Activated B cell treated with CpG ODN at 0.5 μM for 24 hours (primary cell): ENCODE measurements at regions of chr15 and their contacts with region 1.

Region 1: GRCh38 chr15:88904624-88905327 is 8.4 kb downstream of the MFGE8 start:
- DNase-seq: peak; percentile 64
- ATAC-seq: peak; percentile 92
- H3K4me3 Mint-ChIP-seq: no peak overlapping the region
- H3K27ac Mint-ChIP-seq: no peak overlapping the region
- H3K4me1 Mint-ChIP-seq: peaks cover 7% of the 10 kb centered on the region
- H3K27me3 Mint-ChIP-seq: no peaks in the 10 kb centered on the region
- CTCF ChIP-seq: peak; percentile 96

Region 2: GRCh38 chr15:89017370-89018066 is 112.7 kb after region 1 on chr15:
- CTCF ChIA-PET with region 1: interaction called, 5 read pairs
- POLR2A ChIA-PET with region 1: no interaction called
- intact Hi-C with region 1: loop called (anchors 1 kb)
- DNase-seq: peak; percentile 48
- ATAC-seq: peak; percentile 58
- H3K4me3 Mint-ChIP-seq: peak overlapping the region; percentile 44
- H3K27ac Mint-ChIP-seq: no peak overlapping the region
- H3K4me1 Mint-ChIP-seq: peaks cover 8% of the 10 kb centered on the region
- H3K27me3 Mint-ChIP-seq: peaks cover 32% of the 10 kb centered on the region
- CTCF ChIP-seq: no peak

Region 3: GRCh38 chr15:89129123-89129815 is 224.5 kb after region 1 on chr15:
- CTCF ChIA-PET with region 1: interaction called, 24 read pairs
- POLR2A ChIA-PET with region 1: no interaction called
- intact Hi-C with region 1: loop called (anchors 1 kb)
- DNase-seq: peak; percentile 45
- ATAC-seq: peak; percentile 64
- H3K4me3 Mint-ChIP-seq: no peak overlapping the region
- H3K27ac Mint-ChIP-seq: no peak overlapping the region
- H3K4me1 Mint-ChIP-seq: peaks cover 14% of the 10 kb centered on the region
- H3K27me3 Mint-ChIP-seq: no peaks in the 10 kb centered on the region
- CTCF ChIP-seq: peak; percentile 60

Region 4: GRCh38 chr15:89171136-89172072 is 266.6 kb after region 1 on chr15:
- CTCF ChIA-PET with region 1: interaction called, 11 read pairs
- POLR2A ChIA-PET with region 1: no interaction called
- intact Hi-C with region 1: no loop called
- DNase-seq: no peak
- ATAC-seq: no peak
- H3K4me3 Mint-ChIP-seq: no peak overlapping the region
- H3K27ac Mint-ChIP-seq: no peak overlapping the region
- H3K4me1 Mint-ChIP-seq: peaks cover 3% of the 10 kb centered on the region
- H3K27me3 Mint-ChIP-seq: no peaks in the 10 kb centered on the region
- CTCF ChIP-seq: peak; percentile 23

Region 5: GRCh38 chr15:89177633-89178306 is 273.0 kb after region 1 on chr15:
- CTCF ChIA-PET with region 1: interaction called, 14 read pairs
- POLR2A ChIA-PET with region 1: no interaction called
- intact Hi-C with region 1: loop called (anchors 1 kb)
- DNase-seq: no peak
- ATAC-seq: no peak
- H3K4me3 Mint-ChIP-seq: no peak overlapping the region
- H3K27ac Mint-ChIP-seq: no peak overlapping the region
- H3K4me1 Mint-ChIP-seq: peaks cover 2% of the 10 kb centered on the region
- H3K27me3 Mint-ChIP-seq: no peaks in the 10 kb centered on the region
- CTCF ChIP-seq: no peak